ENCODE measurements at regions of chr12 and their contacts with region 1.

Region 1: DNA sequence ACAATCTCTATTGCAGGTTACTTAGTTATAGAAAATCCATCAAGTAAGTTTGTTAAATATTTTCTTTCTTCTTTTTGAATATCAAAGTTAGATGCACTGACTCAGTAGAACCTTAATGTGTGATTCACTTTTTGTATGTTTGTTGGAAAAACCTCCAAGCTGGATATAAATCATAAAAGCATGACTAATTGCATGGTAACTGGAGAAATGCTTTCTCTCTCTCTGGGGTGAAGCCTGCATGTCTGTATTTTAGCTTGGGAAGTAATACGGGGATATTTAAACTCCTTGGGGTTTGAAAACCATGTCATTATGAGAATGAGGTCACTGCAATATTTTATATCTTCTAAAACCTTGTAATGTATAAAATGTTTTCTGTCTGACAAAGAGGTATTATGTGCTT is 58.6 kb upstream of the MYF6 start:
- DNase-seq: no peak
- H3K4me3 ChIP-seq: no peak overlapping the region
- H3K27ac ChIP-seq: 0 out of 4 replicates have a peak overlapping the region, but pooled peaks of 1 of the 2 experiments have one; percentile 20
- H3K4me1 ChIP-seq: no peaks in the 10 kb centered on the region
- H3K27me3 ChIP-seq: peaks cover under 1% of the 10 kb centered on the region; the same call in 1 of the 2 replicates
- CTCF ChIP-seq: no peak
- EP300 ChIP-seq: no peak
- RAD21 ChIP-seq: no peak

Region 2: DNA sequence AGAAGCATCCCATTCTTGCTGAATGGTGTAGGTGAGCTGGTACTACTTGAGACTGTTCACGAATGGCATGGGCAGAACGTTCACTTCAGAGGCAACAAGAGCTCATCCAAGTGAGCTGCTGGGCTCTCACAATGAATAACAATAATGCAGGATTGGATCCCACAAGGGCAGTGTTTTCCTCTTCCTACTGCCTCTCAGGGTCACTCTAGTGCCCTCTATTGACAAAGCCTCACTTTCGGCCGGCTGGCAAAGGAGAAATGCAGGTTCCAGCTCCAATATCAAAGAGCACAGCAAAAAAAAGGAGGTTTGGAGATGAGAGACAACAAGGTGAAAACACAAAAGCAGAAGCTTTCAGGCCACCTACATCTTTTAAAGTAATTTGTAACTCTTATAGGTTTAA is 16.0 kb before region 1 on chr12:
- CTCF ChIA-PET with region 1: interaction called, 11 read pairs
- POLR2A ChIA-PET with region 1: no interaction called
- DNase-seq: peak; percentile 5
- H3K4me3 ChIP-seq: peak overlapping the region in 1 of 2 experiments; percentile 34; a peak in 1 of 4 replicates
- H3K27ac ChIP-seq: no peak overlapping the region
- H3K4me1 ChIP-seq: peaks cover 0 to 3% of the 10 kb centered on the region in 2 experiments; a peak in 1 of 4 replicates
- H3K27me3 ChIP-seq: no peaks in the 10 kb centered on the region; the same call in 1 of the 2 replicates
- CTCF ChIP-seq: peak; percentile 60
- EP300 ChIP-seq: no peak
- RAD21 ChIP-seq: peak; percentile 46

Region 3: DNA sequence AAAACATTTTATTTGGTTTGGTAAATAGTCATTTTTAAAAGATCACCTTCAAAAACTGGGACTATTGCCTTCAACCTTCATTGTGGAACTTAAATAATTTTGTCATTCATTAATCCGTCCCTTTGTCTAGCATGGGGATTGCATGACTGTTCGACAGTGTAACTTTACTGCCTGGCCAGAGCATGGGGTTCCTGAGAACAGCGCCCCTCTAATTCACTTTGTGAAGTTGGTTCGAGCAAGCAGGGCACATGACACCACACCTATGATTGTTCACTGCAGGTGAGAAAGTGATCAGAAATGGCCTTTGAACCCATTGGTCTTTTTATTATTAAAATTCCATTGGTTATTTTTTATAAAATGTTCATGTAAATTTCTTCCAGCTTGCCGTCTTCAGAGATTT is 21.3 kb after region 1 on chr12:
- CTCF ChIA-PET with region 1: no interaction called
- POLR2A ChIA-PET with region 1: no interaction called
- DNase-seq: no peak
- H3K4me3 ChIP-seq: no peak overlapping the region
- H3K27ac ChIP-seq: no peak overlapping the region
- H3K4me1 ChIP-seq: no peaks in the 10 kb centered on the region
- H3K27me3 ChIP-seq: peaks cover 9% of the 10 kb centered on the region; the same call in 1 of the 2 replicates
- CTCF ChIP-seq: no peak
- EP300 ChIP-seq: no peak
- RAD21 ChIP-seq: no peak

Region 4: GRCh38 chr12:80745851-80746505 is 97.1 kb after region 1 on chr12:
- CTCF ChIA-PET with region 1: no interaction called
- POLR2A ChIA-PET with region 1: no interaction called
- DNase-seq: no peak
- H3K4me3 ChIP-seq: no peak overlapping the region
- H3K27ac ChIP-seq: no peak overlapping the region
- H3K4me1 ChIP-seq: no peaks in the 10 kb centered on the region
- H3K27me3 ChIP-seq: peaks cover 12% of the 10 kb centered on the region
- CTCF ChIP-seq: no peak
- EP300 ChIP-seq: no peak
- RAD21 ChIP-seq: no peak

Measured in SK-N-SH (cell line).